IMR-90 (cell line): ENCODE measurements at regions of chr1 and their contacts with region 1.

Region 1: DNA sequence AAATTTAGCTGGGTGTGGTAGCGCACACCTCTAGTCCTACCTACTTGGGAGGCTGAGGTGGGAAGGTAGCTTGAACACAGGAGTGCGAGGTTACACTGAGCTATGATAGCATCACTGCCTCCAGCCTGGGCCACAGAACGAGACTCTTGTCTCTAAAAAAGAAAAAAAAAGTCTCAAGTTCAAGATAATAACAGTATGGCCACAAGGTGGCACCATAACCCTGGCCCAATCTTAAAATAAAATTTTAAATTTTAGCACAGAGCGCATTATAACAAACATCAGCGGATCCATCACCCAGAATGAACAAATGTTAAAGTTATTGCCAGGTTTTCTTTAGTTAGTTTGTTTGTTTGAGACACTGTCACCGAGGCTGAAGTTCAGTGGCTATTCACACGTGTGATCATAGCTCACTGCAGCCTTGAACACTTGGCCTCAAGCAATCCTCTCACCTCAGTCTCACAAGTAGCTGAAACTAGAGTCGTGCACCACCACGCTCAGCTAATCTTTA is 2.9 kb upstream of the HTR6 start:
- DNase-seq: peak; percentile 52
- ATAC-seq: no peak
- H3K4me3 ChIP-seq: no peak overlapping the region
- H3K27ac ChIP-seq: no peak overlapping the region
- H3K4me1 ChIP-seq: peaks cover 1% of the 10 kb centered on the region; the same call in 1 of the 2 replicates
- H3K27me3 ChIP-seq: peaks cover 37% of the 10 kb centered on the region
- CTCF ChIP-seq: peak; percentile 75
- POLR2A ChIP-seq: no peak
- RAD21 ChIP-seq: peak; percentile 77

Region 2: GRCh38 chr1:19110257-19110927 is 551.4 kb before region 1 on chr1:
- CTCF ChIA-PET with region 1: no interaction called
- POLR2A ChIA-PET with region 1: no interaction called
- dilution Hi-C with region 1: no loop called
- in situ Hi-C with region 1: no loop called
- intact Hi-C with region 1: no loop called
- DNase-seq: no peak
- ATAC-seq: no peak
- H3K4me3 ChIP-seq: no peak overlapping the region
- H3K27ac ChIP-seq: no peak overlapping the region
- H3K4me1 ChIP-seq: no peaks in the 10 kb centered on the region
- H3K27me3 ChIP-seq: no peaks in the 10 kb centered on the region
- CTCF ChIP-seq: no peak
- POLR2A ChIP-seq: no peak
- RAD21 ChIP-seq: no peak

Region 3: GRCh38 chr1:19704247-19705113 is 42.7 kb after region 1 on chr1:
- CTCF ChIA-PET with region 1: interaction called, 27 read pairs
- POLR2A ChIA-PET with region 1: interaction called, 4 read pairs
- dilution Hi-C with region 1: no loop called
- in situ Hi-C with region 1: no loop called
- intact Hi-C with region 1: loop called (anchors 1 kb)
- DNase-seq: peak; percentile 69
- ATAC-seq: peak; percentile 100
- H3K4me3 ChIP-seq: no peak overlapping the region
- H3K27ac ChIP-seq: no peak overlapping the region
- H3K4me1 ChIP-seq: no peaks in the 10 kb centered on the region
- H3K27me3 ChIP-seq: no peaks in the 10 kb centered on the region
- CTCF ChIP-seq: peak; percentile 87
- POLR2A ChIP-seq: no peak
- RAD21 ChIP-seq: peak; percentile 69

Region 4: DNA sequence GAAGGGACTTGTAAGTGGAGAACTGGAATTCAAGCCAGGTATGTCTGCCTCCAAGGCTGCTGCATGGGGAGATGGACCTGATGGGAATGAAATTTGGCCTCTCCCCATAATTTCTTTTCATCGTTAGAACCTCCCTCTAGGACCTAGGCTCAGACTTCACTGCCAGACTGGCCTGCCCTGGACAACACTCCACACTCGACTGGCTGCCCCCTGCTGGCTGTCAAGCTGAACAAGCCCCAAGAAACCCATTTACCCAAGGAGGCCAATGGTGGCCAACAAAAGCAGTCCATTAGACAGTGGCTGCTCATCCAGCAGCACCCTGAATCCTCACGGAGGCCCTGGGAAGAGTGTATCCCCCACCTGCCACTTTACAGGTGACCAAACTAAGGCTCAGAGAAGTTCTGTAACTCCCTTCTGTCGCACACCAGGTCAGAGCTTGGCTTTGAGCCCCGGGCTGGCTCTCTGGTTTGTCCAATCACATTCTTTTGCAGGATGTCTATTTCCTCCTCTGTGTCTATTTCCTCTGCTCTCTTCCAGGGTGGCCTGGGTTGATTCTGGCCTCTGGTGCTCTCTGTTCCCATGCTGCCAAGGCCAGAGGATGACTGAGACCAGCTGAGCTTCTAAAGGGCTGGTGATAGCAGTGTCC is 149.6 kb after region 1 on chr1:
- CTCF ChIA-PET with region 1: interaction called, 3 read pairs
- POLR2A ChIA-PET with region 1: no interaction called
- dilution Hi-C with region 1: no loop called
- in situ Hi-C with region 1: no loop called
- intact Hi-C with region 1: loop called (anchors 1 kb)
- DNase-seq: peak; percentile 49
- ATAC-seq: peak; percentile 90
- H3K4me3 ChIP-seq: no peak overlapping the region
- H3K27ac ChIP-seq: no peak overlapping the region
- H3K4me1 ChIP-seq: no peaks in the 10 kb centered on the region
- H3K27me3 ChIP-seq: peaks cover 14% of the 10 kb centered on the region; the same call in 1 of the 2 replicates
- CTCF ChIP-seq: peak; percentile 70
- POLR2A ChIP-seq: no peak
- RAD21 ChIP-seq: peak; percentile 70

Region 5: GRCh38 chr1:19882111-19883071 is 220.6 kb after region 1 on chr1 and contains the start of gene OTUD3:
- CTCF ChIA-PET with region 1: no interaction called
- POLR2A ChIA-PET with region 1: no interaction called
- dilution Hi-C with region 1: no loop called
- in situ Hi-C with region 1: no loop called
- intact Hi-C with region 1: loop called (anchors 10 kb)
- DNase-seq: peak; percentile 97
- ATAC-seq: peak; percentile 95
- H3K4me3 ChIP-seq: peak within 1 kb of the TSS; percentile 92
- H3K27ac ChIP-seq: peak within 1 kb of the TSS; percentile 86
- H3K4me1 ChIP-seq: peaks cover 6% of the 10 kb centered on the region
- H3K27me3 ChIP-seq: no peaks in the 10 kb centered on the region; the same call in 1 of the 2 replicates
- CTCF ChIP-seq: peak; percentile 93
- POLR2A ChIP-seq: peak; percentile 83
- RAD21 ChIP-seq: peak; percentile 49
- total RNA-seq, gene OTUD3: 2.9 and 6.1 TPM in 2 replicates